ENCODE measurements at regions of chr10 and their contacts with region 1.

Region 1: DNA sequence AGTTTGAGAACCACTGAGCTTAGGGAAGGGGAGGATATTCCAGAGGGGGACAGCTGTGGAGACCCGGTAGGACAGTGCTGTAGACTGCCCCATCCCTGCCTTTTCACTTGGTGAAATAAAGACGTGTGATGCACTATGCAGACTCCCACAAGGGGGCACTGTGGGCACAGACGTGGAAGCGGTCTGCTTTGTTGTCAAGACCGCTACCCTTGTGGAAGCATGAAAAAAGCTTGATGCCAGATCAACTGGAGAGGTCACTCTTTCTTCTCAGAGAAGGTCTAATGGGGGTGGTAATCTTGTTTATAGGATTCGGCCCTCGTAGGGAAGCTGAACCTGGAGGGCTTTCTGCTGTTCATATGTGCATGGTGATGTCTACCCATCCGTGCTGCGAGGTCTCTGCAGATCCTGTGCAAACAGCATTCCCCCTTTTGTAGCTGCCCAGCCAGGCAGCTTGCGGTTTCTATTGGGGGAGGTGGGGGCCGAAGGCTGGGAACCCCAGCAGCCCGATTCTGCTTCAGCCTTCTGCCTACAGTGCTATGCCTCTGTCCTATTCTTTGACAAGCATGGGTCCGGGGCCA is 13.7 kb downstream of the RPS24 start:
- DNase-seq: peak; percentile 85
- H3K4me3 ChIP-seq: no peak overlapping the region
- H3K27ac ChIP-seq: no peak overlapping the region
- H3K4me1 ChIP-seq: no peaks in the 10 kb centered on the region
- H3K27me3 ChIP-seq: no peaks in the 10 kb centered on the region
- CTCF ChIP-seq: peak; percentile 84 to 90 (median 87)
- POLR2A ChIP-seq: no peak

Region 2: DNA sequence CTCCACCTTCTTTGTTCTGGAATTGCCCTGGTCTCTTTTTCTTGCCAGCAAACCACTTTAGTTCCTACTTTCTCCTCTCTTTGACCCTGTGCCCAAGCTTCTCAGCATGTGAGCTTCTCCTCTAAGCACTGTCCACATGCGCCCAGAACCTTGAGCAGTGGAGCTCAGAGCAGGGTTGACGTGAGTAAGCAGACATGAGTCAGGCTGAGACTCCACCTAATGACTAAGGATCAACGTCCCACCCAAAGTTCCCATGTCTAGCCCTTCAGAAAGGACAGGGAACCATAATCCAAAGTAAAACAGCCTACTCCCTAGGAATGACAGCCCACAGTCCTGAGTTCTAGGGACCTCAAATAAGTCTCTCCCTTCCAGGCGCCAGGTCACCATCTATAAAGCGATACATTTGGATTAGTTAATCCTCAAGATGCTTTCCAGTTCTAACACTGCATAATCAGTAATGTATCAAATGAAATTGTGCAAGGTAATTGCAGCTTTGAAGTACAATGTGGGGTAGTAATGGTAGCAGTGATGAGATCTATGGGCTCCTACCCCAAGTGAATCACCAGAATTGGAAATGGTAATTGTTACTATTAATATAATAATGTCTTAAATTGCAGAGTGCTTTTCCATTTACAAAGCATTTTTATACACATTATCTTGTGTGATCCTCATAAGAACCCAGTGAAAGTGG is 454.3 kb before region 1 on chr10:
- intact Hi-C with region 1: no loop called
- DNase-seq: no peak
- H3K4me3 ChIP-seq: no peak overlapping the region
- H3K27ac ChIP-seq: no peak overlapping the region
- H3K4me1 ChIP-seq: no peaks in the 10 kb centered on the region
- H3K27me3 ChIP-seq: no peaks in the 10 kb centered on the region
- CTCF ChIP-seq: no peak
- POLR2A ChIP-seq: no peak

Region 3: DNA sequence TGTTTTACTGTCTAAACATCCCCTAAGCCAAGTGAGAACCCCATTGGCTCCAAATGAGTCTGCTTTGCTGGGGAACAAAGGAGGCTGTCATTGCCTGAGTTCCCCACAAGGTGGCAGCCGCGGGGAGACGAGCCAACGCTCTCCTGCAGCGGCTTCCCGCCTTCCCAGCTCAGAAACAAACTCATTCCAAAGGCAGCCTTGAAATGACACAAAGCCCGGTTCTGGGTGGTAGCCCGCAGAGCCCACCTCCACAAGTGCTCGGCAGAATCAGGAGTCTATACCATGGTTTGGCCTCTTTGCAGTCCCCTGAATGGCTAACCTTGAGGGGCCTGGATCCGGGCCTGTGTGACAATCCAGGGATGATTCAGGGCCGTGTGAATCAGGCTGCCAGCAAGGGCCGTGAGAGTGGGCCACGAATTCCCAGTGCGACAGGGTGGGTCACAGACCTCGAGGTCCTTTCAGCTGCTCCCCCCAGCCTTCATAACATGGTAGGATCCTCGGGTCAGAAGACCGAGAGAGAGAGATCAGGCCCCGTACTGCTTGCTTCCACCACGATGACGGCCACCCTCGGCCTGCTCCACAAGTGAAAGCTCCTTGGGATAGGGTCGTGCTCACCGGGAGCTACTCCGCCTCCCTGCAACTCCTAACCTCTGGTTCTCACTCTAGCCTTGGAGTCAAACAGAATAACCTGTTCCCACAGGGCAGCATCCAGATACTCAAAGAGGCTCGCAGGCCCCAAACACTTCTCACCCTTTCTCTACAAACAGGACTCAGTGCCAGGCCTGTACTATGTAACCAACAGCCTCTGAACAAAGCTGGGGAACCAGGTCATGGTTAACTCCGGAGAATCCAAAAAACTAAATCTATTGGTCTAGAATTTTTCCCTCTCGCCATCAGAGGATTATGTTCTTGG is 200.4 kb before region 1 on chr10:
- intact Hi-C with region 1: no loop called
- DNase-seq: peak; percentile 81
- H3K4me3 ChIP-seq: no peak overlapping the region
- H3K27ac ChIP-seq: peak overlapping the region; percentile 78 to 81
- H3K4me1 ChIP-seq: peaks cover 13% of the 10 kb centered on the region
- H3K27me3 ChIP-seq: no peaks in the 10 kb centered on the region
- CTCF ChIP-seq: peak; percentile 96 to 98 (median 98)
- POLR2A ChIP-seq: no peak

Region 4: GRCh38 chr10:78004215-78005026 is 43.0 kb before region 1 on chr10:
- intact Hi-C with region 1: no loop called
- DNase-seq: no peak
- H3K4me3 ChIP-seq: no peak overlapping the region
- H3K27ac ChIP-seq: peak overlapping the region in 1 of 2 donors; percentile 4
- H3K4me1 ChIP-seq: peaks cover 2% of the 10 kb centered on the region
- H3K27me3 ChIP-seq: no peaks in the 10 kb centered on the region
- CTCF ChIP-seq: no peak
- POLR2A ChIP-seq: no peak

Region 5: GRCh38 chr10:78302989-78303854 is 255.8 kb after region 1 on chr10:
- intact Hi-C with region 1: loop called (anchors 5 kb)
- DNase-seq: peak; percentile 90
- H3K4me3 ChIP-seq: peak overlapping the region; percentile 48 to 54
- H3K27ac ChIP-seq: peak overlapping the region; percentile 84 to 87
- H3K4me1 ChIP-seq: peaks cover 4% of the 10 kb centered on the region
- H3K27me3 ChIP-seq: no peaks in the 10 kb centered on the region
- CTCF ChIP-seq: peak; percentile 54 to 91 (median 77)
- POLR2A ChIP-seq: peak; percentile 71